ENCODE measurements at regions of chr17 and their contacts with region 1.

Region 1: GRCh38 chr17:55356434-55357328 is 65.0 kb downstream of the MMD start:
- DNase-seq: peak; percentile 78 to 87 (median 83)
- H3K4me3 ChIP-seq: no peak overlapping the region
- H3K27ac ChIP-seq: no peak overlapping the region
- H3K4me1 ChIP-seq: peaks cover 0 to 2% (median 0%) of the 10 kb centered on the region in 4 experiments
- H3K27me3 ChIP-seq: no peaks in the 10 kb centered on the region

Region 2: DNA sequence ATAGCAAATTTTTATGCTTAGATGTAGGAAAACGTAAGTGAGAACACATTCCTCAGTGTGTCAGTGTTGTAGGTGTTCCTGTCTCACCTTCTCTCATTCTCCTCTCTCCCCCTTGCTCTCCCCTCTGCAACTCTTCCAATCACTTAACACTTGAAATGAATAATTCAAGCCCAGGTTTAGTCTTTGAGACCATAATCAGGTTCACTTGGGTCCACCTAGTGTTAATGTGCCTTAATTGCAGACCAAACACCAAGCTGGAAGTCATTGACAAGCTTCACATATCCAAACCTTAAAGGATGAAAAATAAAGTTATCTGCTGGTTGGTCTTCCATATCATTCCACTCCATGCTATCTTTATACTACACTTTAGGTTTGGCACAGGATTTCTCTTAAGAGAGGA is 351.2 kb before region 1 on chr17:
- CTCF ChIA-PET with region 1: interaction called, 13 read pairs
- POLR2A ChIA-PET with region 1: no interaction called
- DNase-seq: peak; percentile 31 to 53 (median 41)
- H3K4me3 ChIP-seq: no peak overlapping the region
- H3K27ac ChIP-seq: no peak overlapping the region
- H3K4me1 ChIP-seq: peaks cover 0 to 2% (median 1%) of the 10 kb centered on the region in 4 experiments
- H3K27me3 ChIP-seq: no peaks in the 10 kb centered on the region

Measured in common myeloid progenitor, CD34-positive (primary cell).